ENCODE measurements at regions of chr20 and their contacts with region 1.

Region 1: DNA sequence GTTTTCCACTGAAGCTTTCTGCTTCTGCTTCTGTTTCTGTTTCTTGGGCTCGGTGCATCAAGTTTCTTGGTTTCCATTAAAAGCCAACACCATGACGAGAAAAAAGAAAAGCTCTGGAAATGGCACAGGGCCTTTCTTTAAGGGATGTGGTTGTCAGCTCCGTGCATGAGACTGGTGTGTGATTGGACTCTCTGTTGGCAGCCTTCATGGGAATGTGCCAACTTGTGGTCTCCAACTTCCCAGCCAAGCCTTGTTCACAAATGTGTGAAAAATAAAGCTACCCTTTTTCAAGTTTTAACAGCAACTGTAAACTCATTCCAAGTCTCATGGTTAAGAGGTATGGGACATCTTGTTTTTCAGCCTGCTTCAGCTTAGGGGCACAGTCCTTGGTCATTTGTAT is 68.7 kb upstream of the CST7 start:
- DNase-seq: no peak
- H3K4me3 Mint-ChIP-seq: no peak overlapping the region
- H3K27ac Mint-ChIP-seq: no peak overlapping the region
- H3K4me1 Mint-ChIP-seq: no peaks in the 10 kb centered on the region
- H3K27me3 Mint-ChIP-seq: peaks cover 4% of the 10 kb centered on the region

Region 2: GRCh38 chr20:24619212-24619611 is 261.1 kb before region 1 on chr20:
- CTCF ChIA-PET with region 1: no interaction called
- intact Hi-C with region 1: loop called (anchors 10 kb)
- DNase-seq: no peak
- H3K4me3 Mint-ChIP-seq: no peak overlapping the region
- H3K27ac Mint-ChIP-seq: no peak overlapping the region
- H3K4me1 Mint-ChIP-seq: no peaks in the 10 kb centered on the region
- H3K27me3 Mint-ChIP-seq: no peaks in the 10 kb centered on the region

Region 3: DNA sequence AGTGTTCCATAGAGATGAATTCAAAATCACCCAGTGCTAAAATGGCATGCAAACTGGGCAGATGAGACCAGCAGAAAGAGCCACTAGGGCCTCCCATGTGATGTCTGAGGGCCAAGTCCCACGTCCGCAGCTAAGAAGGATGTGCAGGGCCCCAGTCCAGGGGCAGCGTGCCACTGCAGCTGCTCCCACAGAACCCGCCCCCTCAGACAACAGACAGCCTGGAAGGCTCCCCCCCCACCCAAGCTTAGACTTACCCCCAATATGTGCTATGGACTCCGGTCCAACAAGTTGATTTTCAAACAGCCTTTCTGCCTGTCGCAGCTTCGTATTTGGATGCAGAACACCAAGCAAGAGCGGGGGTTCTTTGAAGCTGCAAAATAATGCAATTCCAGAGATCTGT is 98.2 kb after region 1 on chr20:
- CTCF ChIA-PET with region 1: no interaction called
- intact Hi-C with region 1: no loop called
- DNase-seq: no peak
- H3K4me3 Mint-ChIP-seq: no peak overlapping the region
- H3K27ac Mint-ChIP-seq: no peak overlapping the region
- H3K4me1 Mint-ChIP-seq: peaks cover 5% of the 10 kb centered on the region
- H3K27me3 Mint-ChIP-seq: no peaks in the 10 kb centered on the region